Heart right ventricle (tissue), 16 donors: ENCODE measurements at regions of chr11 and their contacts with region 1.

Region 1: GRCh38 chr11:34192481-34193401 is 87.3 kb downstream of the NAT10 start:
- DNase-seq: peak; percentile 51 to 53
- ATAC-seq: peak; percentile 56 to 87 (median 80)
- H3K4me3 ChIP-seq: no peak overlapping the region
- H3K27ac ChIP-seq: peak overlapping the region in 8 of 10 donors; percentile 27 to 69 (median 52)
- H3K4me1 ChIP-seq: peaks cover 0 to 42% (median 18%) of the 10 kb centered on the region in 9 donors
- H3K27me3 ChIP-seq: no peaks in the 10 kb centered on the region
- CTCF ChIP-seq: no peak

Region 2: GRCh38 chr11:34157163-34157562 is 35.6 kb before region 1 on chr11:
- intact Hi-C with region 1: loop called in 1 of 10 experiments (anchors 1 kb)
- DNase-seq: peak; percentile 49 to 52
- ATAC-seq: peak in 6 of 8 donors; percentile 7 to 56 (median 37)
- H3K4me3 ChIP-seq: no peak overlapping the region
- H3K27ac ChIP-seq: peak overlapping the region in 1 of 10 donors; percentile 25
- H3K4me1 ChIP-seq: peaks cover 0 to 32% (median 10%) of the 10 kb centered on the region in 9 donors
- H3K27me3 ChIP-seq: no peaks in the 10 kb centered on the region
- CTCF ChIP-seq: no peak

Region 3: GRCh38 chr11:34243726-34244464 is 51.2 kb after region 1 on chr11:
- intact Hi-C with region 1: loop called in 1 of 10 experiments (anchors 5 kb)
- DNase-seq: no peak
- ATAC-seq: peak in 5 of 8 donors; percentile 21 to 77 (median 60)
- H3K4me3 ChIP-seq: no peak overlapping the region
- H3K27ac ChIP-seq: peak overlapping the region in 6 of 10 donors; percentile 4 to 48 (median 35)
- H3K4me1 ChIP-seq: peaks cover 4 to 43% (median 24%) of the 10 kb centered on the region in 9 donors
- H3K27me3 ChIP-seq: no peaks in the 10 kb centered on the region
- CTCF ChIP-seq: no peak

Region 4: DNA sequence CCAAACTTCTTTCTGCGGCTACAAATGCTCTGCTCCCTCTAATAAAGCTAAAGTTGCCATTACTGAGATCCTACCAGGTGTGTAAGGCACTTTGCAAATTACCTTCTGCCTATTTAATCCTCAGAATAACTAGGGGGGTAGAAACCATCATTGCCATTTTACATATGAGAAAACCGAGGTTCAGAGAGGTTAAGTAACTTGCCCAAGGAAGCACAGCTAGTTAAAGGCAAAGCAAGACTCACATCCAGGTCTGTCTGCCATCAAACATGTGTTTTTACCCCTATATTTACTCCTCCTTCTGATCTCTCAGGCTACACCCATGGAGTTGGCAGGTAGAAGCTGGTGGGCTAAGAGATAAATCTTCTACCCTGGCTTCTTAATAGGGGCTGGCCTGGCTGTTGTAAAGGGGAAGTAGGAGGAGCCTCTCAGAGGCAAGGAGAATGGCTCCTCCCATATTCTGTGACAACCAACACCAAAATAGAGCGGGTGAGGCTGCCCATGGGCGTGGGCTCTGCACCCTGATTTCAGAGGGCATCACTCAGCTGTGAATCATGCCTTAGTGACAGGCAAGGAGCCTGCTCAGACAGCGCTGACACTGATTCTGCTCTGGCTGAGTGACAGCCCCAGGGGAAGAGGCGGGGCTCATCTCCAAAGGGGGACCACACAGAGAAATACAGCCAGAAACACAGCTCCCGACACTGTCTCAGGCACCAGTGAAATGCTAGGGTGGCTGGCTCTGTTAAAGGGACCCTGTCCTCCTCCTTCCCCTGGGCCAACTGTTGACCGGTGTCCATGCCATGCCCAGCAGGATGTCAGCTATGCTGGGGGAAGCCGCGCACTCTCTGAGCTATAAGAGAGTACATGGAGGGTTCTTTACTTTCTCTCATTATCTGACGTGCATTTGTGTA is 58.2 kb after region 1 on chr11:
- intact Hi-C with region 1: loop called in 2 of 10 experiments (anchors 10 kb)
- DNase-seq: peak; percentile 56 to 70
- ATAC-seq: peak; percentile 85 to 97 (median 92)
- H3K4me3 ChIP-seq: peak overlapping the region in 6 of 10 donors; percentile 21 to 35 (median 26)
- H3K27ac ChIP-seq: peak overlapping the region in 8 of 10 donors; percentile 22 to 70 (median 52)
- H3K4me1 ChIP-seq: peaks cover 0 to 30% (median 23%) of the 10 kb centered on the region in 9 donors
- H3K27me3 ChIP-seq: no peaks in the 10 kb centered on the region
- CTCF ChIP-seq: no peak